ENCODE measurements at regions of chr6 and their contacts with region 1.

Region 1: DNA sequence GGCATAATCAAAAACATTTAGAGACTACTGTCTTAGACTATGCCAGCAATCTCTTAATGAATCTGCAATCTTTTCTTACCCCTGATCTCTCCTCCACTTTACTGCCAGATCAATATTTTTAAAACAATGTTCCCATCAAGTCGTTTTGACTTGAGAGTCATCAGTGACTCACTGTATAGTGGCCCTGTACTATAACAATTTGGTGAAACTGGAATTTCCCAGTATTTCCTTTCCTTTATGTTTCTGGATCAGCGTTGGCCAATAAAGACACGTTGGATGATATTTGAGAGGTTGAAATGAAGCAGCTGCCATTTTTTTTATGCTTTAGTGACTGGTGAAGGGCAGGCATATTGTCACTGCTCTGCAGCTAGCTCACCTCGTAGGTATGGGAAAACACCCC is 10.1 kb upstream of the SMIM13 start:
- DNase-seq: no peak
- H3K4me3 ChIP-seq: no peak overlapping the region
- H3K27me3 ChIP-seq: no peaks in the 10 kb centered on the region
- CTCF ChIP-seq: no peak

Region 2: DNA sequence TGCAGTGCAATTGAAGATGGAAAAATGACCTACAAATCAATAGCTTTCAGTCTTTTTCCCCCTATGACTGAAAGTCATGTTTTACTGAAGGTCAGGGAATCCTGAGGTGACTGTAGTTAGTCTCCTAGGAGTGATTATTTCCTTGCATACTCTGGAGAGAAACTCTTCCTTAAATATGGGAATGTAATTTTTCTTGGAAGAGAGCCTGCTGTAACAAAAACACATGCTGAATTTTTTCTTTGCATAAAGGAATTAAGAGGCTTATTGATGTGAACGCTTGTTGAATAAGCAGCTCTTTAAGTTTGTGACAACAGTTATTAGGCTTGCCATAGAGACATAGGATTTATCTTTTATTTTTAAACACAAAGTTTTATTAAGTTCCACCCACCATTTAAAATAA is 103.9 kb before region 1 on chr6:
- CTCF ChIA-PET with region 1: no interaction called
- POLR2A ChIA-PET with region 1: no interaction called
- DNase-seq: no peak
- H3K4me3 ChIP-seq: no peak overlapping the region
- H3K27me3 ChIP-seq: no peaks in the 10 kb centered on the region
- CTCF ChIP-seq: no peak

Region 3: GRCh38 chr6:11064836-11065235 is 18.7 kb before region 1 on chr6:
- CTCF ChIA-PET with region 1: interaction called, 38 read pairs
- POLR2A ChIA-PET with region 1: interaction called, 3 read pairs
- DNase-seq: no peak
- H3K4me3 ChIP-seq: no peak overlapping the region
- H3K27me3 ChIP-seq: no peaks in the 10 kb centered on the region
- CTCF ChIP-seq: no peak

Region 4: DNA sequence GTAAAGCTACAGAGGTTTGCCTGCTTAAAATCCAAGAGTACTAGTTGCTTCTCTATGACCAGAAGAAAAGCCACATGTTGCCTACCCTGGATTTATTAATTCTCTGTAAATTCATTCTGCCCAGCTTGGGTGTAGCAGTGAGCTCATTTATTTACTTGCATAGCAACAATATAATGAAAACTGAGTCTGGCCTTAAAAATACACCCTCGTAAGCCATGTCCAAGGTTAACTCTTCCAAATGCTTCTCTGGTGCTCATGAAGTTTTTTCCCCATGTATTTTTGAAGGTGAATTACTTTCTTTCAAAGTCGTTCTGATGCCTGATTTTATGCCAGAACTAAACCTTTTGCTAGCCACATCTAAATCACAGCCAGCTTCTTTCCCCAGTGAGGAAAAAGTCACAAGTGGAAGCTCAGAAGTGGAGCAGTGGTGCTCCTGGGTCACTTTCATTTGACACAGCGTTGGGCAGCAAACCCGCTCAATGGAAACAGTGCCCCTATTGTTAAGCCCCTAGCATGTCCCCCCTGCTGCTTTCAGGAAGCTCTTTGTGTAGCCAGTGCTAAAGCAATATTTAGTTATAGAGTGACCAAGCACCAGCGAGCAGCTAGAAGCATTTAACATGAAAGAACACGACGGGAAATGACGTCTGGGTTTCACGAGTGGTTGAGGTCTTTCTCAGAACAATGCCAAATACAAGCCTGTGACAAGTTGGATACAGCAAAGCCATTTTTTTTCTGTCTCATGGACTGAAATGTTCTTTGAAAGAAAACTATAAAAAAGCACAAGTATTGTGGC is 119.2 kb after region 1 on chr6:
- CTCF ChIA-PET with region 1: no interaction called
- POLR2A ChIA-PET with region 1: no interaction called
- DNase-seq: no peak
- H3K4me3 ChIP-seq: no peak overlapping the region
- H3K27me3 ChIP-seq: no peaks in the 10 kb centered on the region
- CTCF ChIP-seq: no peak